Calu3 (cell line): ENCODE measurements at regions of chr6 and their contacts with region 1.

Region 1: GRCh38 chr6:63516186-63516944 is 55.9 kb upstream of the LOC128125822 start:
- DNase-seq: no peak
- H3K4me3 Mint-ChIP-seq: no peak overlapping the region
- H3K27ac Mint-ChIP-seq: peak overlapping the region; percentile 60
- H3K4me1 Mint-ChIP-seq: peaks cover 26% of the 10 kb centered on the region
- H3K27me3 Mint-ChIP-seq: no peaks in the 10 kb centered on the region
- CTCF ChIP-seq: no peak

Region 2: DNA sequence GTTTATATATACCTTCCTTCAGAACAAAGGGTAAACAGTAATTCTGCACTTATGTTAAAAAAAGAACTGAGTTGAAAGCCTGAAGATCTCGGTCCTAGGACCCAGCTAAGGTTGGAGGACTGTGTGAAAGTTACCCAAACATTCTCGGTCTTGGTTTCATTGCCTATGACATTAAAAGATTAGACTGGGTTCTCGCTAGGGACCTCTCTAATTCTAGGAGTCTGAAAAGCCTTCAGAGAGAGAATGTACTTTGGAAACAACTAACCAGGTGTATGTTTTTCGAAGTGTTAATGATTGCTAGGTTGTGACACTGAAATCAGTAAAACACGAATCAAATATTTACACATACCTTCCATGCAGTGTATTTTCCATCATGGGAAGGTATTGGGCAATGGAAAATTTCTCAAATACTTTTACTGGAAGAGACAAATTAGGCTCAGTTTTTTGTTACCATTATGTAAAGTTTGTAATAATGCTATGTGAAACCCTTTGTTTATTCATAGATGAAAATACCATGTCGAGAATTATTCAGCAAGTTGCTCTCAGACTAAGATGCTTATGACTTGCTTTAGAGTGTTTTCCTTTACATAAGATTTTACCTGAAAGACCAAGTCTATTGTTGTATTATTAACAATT is 57.8 kb before region 1 on chr6:
- CTCF ChIA-PET with region 1: no interaction called
- intact Hi-C with region 1: loop called (anchors 5 kb)
- DNase-seq: no peak
- H3K4me3 Mint-ChIP-seq: no peak overlapping the region
- H3K27ac Mint-ChIP-seq: peak overlapping the region; percentile 84
- H3K4me1 Mint-ChIP-seq: peaks cover 13% of the 10 kb centered on the region
- H3K27me3 Mint-ChIP-seq: no peaks in the 10 kb centered on the region
- CTCF ChIP-seq: no peak

Region 3: DNA sequence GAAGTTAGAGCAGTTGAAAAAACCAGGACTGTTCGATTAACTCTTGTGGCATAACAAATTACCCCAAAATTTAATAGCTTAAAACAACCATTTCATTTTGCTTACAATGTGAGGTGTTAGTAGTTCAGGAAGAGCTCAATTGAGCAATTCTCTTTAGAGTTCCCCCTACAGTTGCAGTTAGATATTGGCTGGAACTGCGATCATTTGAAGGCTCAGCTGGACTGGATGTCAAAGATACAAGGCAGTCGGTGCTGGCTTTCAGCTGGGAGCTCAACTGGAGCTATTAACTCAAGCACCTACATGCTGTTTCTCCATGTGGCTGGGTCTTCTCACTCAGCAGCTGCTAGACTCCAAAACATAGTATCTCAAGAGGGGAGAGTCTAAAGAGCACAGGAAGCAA is 40.1 kb before region 1 on chr6:
- CTCF ChIA-PET with region 1: no interaction called
- intact Hi-C with region 1: loop called (anchors 5 kb)
- DNase-seq: no peak
- H3K4me3 Mint-ChIP-seq: no peak overlapping the region
- H3K27ac Mint-ChIP-seq: no peak overlapping the region
- H3K4me1 Mint-ChIP-seq: peaks cover 23% of the 10 kb centered on the region
- H3K27me3 Mint-ChIP-seq: no peaks in the 10 kb centered on the region
- CTCF ChIP-seq: no peak

Region 4: DNA sequence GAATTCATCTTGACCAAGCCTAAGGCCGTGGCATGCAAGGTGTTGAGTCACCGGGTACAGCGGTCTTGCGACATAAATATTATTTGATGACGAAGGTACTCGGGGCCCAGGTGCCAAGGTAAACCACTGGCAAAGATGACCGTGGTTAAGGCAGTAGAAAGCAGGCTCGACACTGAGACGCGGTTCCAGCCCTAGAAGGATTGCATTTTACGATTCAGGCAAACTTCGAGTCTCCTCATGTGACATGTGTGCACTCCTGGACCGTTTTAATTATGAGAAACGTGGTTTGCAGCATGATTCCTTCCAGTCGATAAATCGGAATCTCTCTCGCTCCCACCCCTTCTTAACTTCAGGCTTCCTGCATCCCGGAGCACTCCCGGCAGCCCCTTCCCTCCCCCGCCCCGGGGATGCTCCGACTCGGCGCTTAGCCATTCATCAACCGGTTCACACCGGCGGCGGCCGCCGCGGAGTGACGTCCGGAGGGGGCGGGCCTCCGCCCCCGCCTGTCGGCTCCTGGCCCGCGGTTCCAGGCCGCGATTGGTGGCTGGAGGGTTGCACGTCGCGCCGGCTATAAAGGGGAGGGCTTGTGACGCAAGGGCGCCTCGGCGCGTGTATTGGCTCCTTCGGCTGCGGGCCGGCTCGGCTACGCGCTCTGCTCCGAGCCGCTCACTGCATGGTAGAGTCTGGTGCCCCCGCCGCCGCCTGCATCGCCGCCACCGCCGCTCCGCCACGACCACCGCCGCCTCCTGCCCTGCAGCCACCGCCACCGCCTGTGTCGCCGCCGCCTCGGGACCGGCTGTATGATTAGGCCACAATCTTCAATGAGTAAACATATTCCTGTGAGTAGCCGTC is 55.7 kb after region 1 on chr6 and contains the starts of genes LOC128125822 and PTP4A1:
- CTCF ChIA-PET with region 1: no interaction called
- intact Hi-C with region 1: loop called (anchors 2 kb)
- DNase-seq: peak; percentile 97
- H3K4me3 Mint-ChIP-seq: peak within 1 kb of the TSS; percentile 88
- H3K27ac Mint-ChIP-seq: peak within 1 kb of the TSS; percentile 95
- H3K4me1 Mint-ChIP-seq: peaks cover 11% of the 10 kb centered on the region
- H3K27me3 Mint-ChIP-seq: no peaks in the 10 kb centered on the region
- CTCF ChIP-seq: no peak
- total RNA-seq, gene PTP4A1: 97.3 and 110 TPM in 2 replicates

Region 5: DNA sequence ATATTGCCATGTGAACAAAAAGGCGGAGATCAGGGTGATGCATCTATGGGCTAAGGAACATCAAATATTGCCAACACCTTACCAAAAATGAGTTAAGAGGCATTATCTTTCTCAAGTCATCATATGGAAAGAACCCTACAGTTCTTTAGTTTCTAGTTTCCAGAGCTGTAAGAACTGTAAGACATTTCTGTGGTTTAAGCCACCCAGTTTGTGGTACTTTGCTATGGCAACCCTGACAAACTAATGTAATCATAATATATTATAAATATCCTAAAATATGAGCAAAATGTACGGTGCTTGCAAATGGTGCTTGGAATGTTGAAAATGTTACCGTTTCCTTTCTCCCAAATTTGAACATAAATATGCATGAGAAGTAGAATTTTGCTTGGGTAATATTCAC is 468.9 kb after region 1 on chr6:
- CTCF ChIA-PET with region 1: no interaction called
- intact Hi-C with region 1: no loop called
- DNase-seq: no peak
- H3K4me3 Mint-ChIP-seq: no peak overlapping the region
- H3K27ac Mint-ChIP-seq: no peak overlapping the region
- H3K4me1 Mint-ChIP-seq: no peaks in the 10 kb centered on the region
- H3K27me3 Mint-ChIP-seq: peaks cover 19% of the 10 kb centered on the region
- CTCF ChIP-seq: no peak